ENCODE measurements at regions of chr2 and their contacts with region 1.

Region 1: DNA sequence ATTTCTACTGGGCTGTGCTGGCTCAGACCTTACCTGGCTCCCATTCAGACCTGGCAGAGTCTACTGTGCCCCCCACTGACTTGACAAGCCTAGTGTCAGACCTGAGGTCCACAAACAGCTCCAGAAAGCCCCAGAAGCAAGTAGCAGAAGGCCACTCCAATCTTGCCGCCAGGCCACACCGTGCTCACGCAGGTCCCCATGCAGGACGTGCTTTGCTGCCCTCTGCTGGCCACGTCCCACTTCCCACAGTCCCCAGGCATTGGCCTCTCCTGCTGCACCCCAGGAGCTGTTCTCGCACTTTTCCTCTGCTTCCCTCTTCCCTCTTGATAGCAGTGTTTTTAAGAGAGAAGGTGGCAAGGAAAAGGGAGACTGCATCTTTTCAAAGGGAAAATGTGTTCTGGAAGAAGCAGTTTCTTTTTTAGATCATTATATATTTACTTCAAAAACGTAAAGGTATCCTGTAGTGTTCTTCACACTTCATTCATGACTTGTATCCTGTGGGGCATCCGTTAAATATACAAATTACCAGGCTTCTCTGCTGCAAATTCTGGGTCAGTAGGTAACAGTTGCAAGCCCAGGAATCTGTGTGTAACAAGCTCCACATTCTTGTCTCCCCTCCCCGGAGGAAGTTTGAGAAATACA is 81.4 kb upstream of the PAPOLG start:
- DNase-seq: peak; percentile 92
- H3K4me3 Mint-ChIP-seq: no peak overlapping the region
- H3K27ac Mint-ChIP-seq: no peak overlapping the region
- H3K4me1 Mint-ChIP-seq: no peaks in the 10 kb centered on the region
- H3K27me3 Mint-ChIP-seq: no peaks in the 10 kb centered on the region

Region 2: GRCh38 chr2:60560734-60561644 is 113.7 kb before region 1 on chr2:
- CTCF ChIA-PET with region 1: interaction called, 4 read pairs
- intact Hi-C with region 1: loop called (anchors 1 kb)
- DNase-seq: peak; percentile 20
- H3K4me3 Mint-ChIP-seq: no peak overlapping the region
- H3K27ac Mint-ChIP-seq: no peak overlapping the region
- H3K4me1 Mint-ChIP-seq: peaks cover 13% of the 10 kb centered on the region
- H3K27me3 Mint-ChIP-seq: peaks cover 60% of the 10 kb centered on the region

Region 3: GRCh38 chr2:60652832-60653340 is 21.8 kb before region 1 on chr2:
- CTCF ChIA-PET with region 1: interaction called, 13 read pairs
- intact Hi-C with region 1: no loop called
- DNase-seq: no peak
- H3K4me3 Mint-ChIP-seq: no peak overlapping the region
- H3K27ac Mint-ChIP-seq: no peak overlapping the region
- H3K4me1 Mint-ChIP-seq: no peaks in the 10 kb centered on the region
- H3K27me3 Mint-ChIP-seq: peaks cover 5% of the 10 kb centered on the region

Region 4: GRCh38 chr2:60659026-60659425 is 15.6 kb before region 1 on chr2:
- CTCF ChIA-PET with region 1: interaction called, 13 read pairs
- intact Hi-C with region 1: no loop called
- DNase-seq: no peak
- H3K4me3 Mint-ChIP-seq: no peak overlapping the region
- H3K27ac Mint-ChIP-seq: no peak overlapping the region
- H3K4me1 Mint-ChIP-seq: no peaks in the 10 kb centered on the region
- H3K27me3 Mint-ChIP-seq: peaks cover 4% of the 10 kb centered on the region

Region 5: DNA sequence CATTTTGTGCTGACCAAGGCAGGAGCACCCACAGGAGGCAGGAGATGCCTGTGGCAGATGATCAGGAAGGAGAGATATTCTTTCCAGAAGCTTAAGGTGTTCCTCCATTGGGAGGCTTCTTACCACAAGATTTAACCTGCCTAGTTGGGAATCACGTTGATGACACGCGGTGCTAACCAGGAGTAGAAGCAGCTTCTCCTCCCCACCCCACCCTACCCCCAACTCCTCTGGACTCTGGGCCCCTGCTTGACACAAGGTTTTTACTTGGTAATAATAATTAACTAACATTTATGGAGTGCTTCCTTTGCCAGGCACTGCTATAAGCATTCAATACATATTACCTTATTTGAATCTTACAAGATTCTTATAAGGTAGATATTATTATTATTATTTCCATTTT is 18.9 kb after region 1 on chr2:
- CTCF ChIA-PET with region 1: interaction called, 10 read pairs
- intact Hi-C with region 1: no loop called
- DNase-seq: no peak
- H3K4me3 Mint-ChIP-seq: no peak overlapping the region
- H3K27ac Mint-ChIP-seq: no peak overlapping the region
- H3K4me1 Mint-ChIP-seq: no peaks in the 10 kb centered on the region
- H3K27me3 Mint-ChIP-seq: peaks cover 2% of the 10 kb centered on the region

Region 6: DNA sequence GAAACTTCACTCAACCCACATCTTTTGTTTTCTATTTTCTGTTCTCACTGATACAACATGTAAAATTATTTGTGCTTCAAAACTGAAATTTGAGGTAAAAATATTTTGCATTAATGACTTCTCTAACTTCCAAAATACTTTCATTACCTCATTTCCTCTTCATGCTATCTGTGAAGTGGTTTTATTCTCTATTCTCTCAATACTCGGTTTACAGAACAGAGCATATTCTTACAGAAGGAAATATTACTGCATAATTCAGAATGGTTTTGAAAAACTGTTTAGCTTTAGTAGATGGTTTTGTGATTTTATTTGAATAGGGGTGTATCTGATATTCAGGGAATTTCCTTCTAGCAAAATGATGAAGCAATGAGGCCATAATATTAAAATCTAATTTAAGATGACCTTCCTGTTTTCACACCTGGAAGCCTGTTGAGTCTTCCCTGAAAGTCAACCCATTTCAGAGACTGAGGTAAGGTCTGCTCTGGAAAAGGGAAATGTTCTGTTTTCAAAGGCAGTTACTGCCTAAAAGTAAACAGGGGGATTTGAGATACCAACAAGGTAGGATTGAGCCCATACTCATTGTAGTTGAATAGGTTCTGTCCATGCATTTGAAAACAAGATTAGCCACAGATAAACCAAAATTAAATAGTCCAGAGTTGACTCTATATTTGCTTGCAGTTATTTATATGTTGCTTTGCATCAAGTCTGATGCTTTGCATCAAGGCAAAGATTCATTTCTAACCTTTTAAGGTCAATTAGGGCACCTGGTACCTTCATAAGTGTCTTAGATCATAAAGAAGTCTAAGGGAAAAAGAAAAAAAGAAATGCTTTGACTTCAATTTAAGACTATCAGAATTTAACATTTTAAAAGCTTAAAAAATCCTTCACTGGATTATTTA is 292.1 kb after region 1 on chr2:
- CTCF ChIA-PET with region 1: no interaction called
- intact Hi-C with region 1: no loop called
- DNase-seq: no peak
- H3K4me3 Mint-ChIP-seq: peak overlapping the region; percentile 11
- H3K27ac Mint-ChIP-seq: peak overlapping the region; percentile 62
- H3K4me1 Mint-ChIP-seq: peaks cover 62% of the 10 kb centered on the region
- H3K27me3 Mint-ChIP-seq: no peaks in the 10 kb centered on the region

Measured in activated naive CD4-positive, alpha-beta T cell treated with anti-CD3 and anti-CD28 coated beads for 36 hours (primary cell).